IMR-90 (cell line): ENCODE measurements at regions of chr1 and their contacts with region 1.

Region 1: DNA sequence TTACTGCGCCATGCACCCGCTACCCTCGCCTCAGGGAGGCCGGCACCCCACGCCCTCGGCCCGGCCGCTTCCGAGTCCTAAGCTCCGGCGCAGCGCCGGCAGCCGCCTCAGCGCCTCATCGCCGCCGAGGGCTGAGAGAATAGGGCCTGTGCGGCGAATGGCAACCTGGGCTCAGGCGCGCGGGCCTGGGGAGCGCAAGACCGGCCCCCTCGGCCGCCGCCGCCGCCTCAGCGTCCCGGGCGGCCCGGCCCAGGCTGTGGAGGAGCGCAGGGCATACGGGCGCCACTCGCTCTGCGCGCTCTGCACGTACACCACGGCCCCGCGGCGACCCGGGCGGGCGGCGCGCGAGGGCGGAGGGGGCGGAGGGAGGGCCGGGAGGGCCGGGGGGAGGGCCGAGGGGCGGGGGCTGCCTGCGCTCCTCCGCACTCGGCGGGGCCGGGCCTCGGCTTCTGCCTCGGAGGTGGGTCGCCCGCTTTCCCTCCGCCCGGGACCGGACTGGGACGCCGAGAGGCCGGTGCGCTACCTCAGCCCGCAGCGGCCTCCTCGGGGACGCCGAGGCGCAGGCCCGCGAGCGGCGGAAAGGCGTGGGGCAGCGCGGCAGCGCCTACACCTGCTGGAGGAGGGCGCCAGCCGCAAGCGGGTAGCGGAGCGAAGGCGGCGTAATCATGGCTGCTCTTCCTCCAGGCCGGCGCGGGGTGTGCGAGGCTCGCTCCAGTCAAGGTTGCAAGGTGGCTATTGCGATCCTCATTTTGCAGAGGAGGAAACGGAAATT is at the start of gene EGLN1:
- DNase-seq: peak; percentile 88
- ATAC-seq: peak; percentile 85
- H3K4me3 ChIP-seq: peak within 1 kb of the TSS; percentile 78
- H3K27ac ChIP-seq: peak within 1 kb of the TSS; percentile 98
- H3K4me1 ChIP-seq: peaks cover 7% of the 10 kb centered on the region
- H3K27me3 ChIP-seq: no peaks in the 10 kb centered on the region
- CTCF ChIP-seq: peak; percentile 38
- POLR2A ChIP-seq: peak; percentile 81
- RAD21 ChIP-seq: peak; percentile 51
- total RNA-seq, gene EGLN1: 26.9 and 66.4 TPM in 2 replicates

Region 2: GRCh38 chr1:231357831-231358354 is 64.3 kb before region 1 on chr1:
- CTCF ChIA-PET with region 1: no interaction called
- POLR2A ChIA-PET with region 1: no interaction called
- dilution Hi-C with region 1: no loop called
- in situ Hi-C with region 1: loop called (anchors 5 kb)
- intact Hi-C with region 1: loop called (anchors 1 kb)
- DNase-seq: peak; percentile 79
- ATAC-seq: peak; percentile 75
- H3K4me3 ChIP-seq: no peak overlapping the region
- H3K27ac ChIP-seq: no peak overlapping the region
- H3K4me1 ChIP-seq: peaks cover 5% of the 10 kb centered on the region
- H3K27me3 ChIP-seq: no peaks in the 10 kb centered on the region
- CTCF ChIP-seq: peak; percentile 87
- POLR2A ChIP-seq: peak; percentile 37; the same call in 1 of the 2 replicates
- RAD21 ChIP-seq: peak; percentile 92

Region 3: GRCh38 chr1:231369282-231369681 is 52.9 kb before region 1 on chr1:
- CTCF ChIA-PET with region 1: no interaction called
- POLR2A ChIA-PET with region 1: no interaction called
- dilution Hi-C with region 1: no loop called
- in situ Hi-C with region 1: loop called (anchors 5 kb)
- intact Hi-C with region 1: loop called (anchors 2 kb)
- DNase-seq: no peak
- ATAC-seq: no peak
- H3K4me3 ChIP-seq: no peak overlapping the region
- H3K27ac ChIP-seq: no peak overlapping the region
- H3K4me1 ChIP-seq: no peaks in the 10 kb centered on the region; the same call in 1 of the 2 replicates
- H3K27me3 ChIP-seq: no peaks in the 10 kb centered on the region
- CTCF ChIP-seq: no peak
- POLR2A ChIP-seq: no peak
- RAD21 ChIP-seq: no peak

Region 4: GRCh38 chr1:231517064-231517463 is 94.9 kb after region 1 on chr1:
- CTCF ChIA-PET with region 1: no interaction called
- POLR2A ChIA-PET with region 1: no interaction called
- dilution Hi-C with region 1: no loop called
- in situ Hi-C with region 1: no loop called
- intact Hi-C with region 1: no loop called
- DNase-seq: no peak
- ATAC-seq: no peak
- H3K4me3 ChIP-seq: no peak overlapping the region
- H3K27ac ChIP-seq: no peak overlapping the region
- H3K4me1 ChIP-seq: no peaks in the 10 kb centered on the region
- H3K27me3 ChIP-seq: no peaks in the 10 kb centered on the region
- CTCF ChIP-seq: no peak
- POLR2A ChIP-seq: no peak
- RAD21 ChIP-seq: no peak

Region 5: DNA sequence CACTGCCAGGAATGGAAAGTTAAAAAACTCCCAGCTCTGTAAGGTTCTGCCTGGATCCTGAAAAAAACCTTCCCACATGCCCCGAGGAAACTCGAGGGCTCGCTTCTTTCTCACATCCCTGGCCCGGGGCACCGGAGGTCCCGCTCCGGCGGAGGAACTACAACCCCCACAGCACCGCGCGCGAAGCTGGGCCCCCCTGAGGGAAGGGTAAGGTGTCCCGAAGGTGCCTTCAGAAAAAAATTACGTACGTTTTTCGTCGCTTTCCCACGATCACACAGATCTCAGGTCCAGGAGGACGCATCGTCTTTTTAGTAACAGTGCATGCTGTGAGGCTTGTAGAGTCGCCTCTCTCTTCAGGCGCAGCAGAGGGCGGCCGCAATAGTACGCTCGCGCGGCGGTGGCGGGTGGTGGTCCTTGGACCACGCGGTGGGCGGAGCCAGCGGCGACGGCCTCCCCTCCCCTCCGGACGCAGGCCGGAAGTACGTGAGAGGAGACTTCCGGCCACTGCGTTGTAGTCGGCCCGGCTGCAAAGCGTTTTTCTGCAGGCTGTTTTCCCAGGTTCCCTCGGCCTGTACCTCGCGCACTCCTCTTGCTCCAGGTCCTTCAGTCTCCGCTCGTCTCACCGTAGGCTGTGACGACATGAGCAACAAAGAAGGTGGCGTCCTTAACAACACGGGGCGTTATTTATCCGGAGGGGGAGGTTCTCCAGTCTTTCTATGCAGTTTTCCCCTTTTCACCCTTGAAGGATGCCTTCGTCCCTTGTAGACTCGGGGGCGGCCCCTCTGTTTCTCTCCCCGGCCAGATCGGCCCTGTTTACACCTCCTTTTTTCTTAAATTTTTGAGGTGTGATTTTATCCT is 106.2 kb after region 1 on chr1 and contains the start of gene TSNAX:
- CTCF ChIA-PET with region 1: no interaction called
- POLR2A ChIA-PET with region 1: no interaction called
- dilution Hi-C with region 1: no loop called
- in situ Hi-C with region 1: no loop called
- intact Hi-C with region 1: loop called (anchors 1 kb)
- DNase-seq: peak; percentile 92
- ATAC-seq: peak; percentile 99
- H3K4me3 ChIP-seq: peak within 1 kb of the TSS; percentile 75
- H3K27ac ChIP-seq: peak within 1 kb of the TSS; percentile 89
- H3K4me1 ChIP-seq: peaks cover 5% of the 10 kb centered on the region
- H3K27me3 ChIP-seq: no peaks in the 10 kb centered on the region
- CTCF ChIP-seq: no peak
- POLR2A ChIP-seq: peak; percentile 81
- RAD21 ChIP-seq: no peak; the same call in 1 of the 2 replicates
- total RNA-seq, gene TSNAX: 60.6 and 61.4 TPM in 2 replicates

Region 6: GRCh38 chr1:231584124-231584523 is 161.9 kb after region 1 on chr1:
- CTCF ChIA-PET with region 1: no interaction called
- POLR2A ChIA-PET with region 1: no interaction called
- dilution Hi-C with region 1: no loop called
- in situ Hi-C with region 1: no loop called
- intact Hi-C with region 1: loop called (anchors 2 kb)
- DNase-seq: peak; percentile 82
- ATAC-seq: peak; percentile 88
- H3K4me3 ChIP-seq: no peak overlapping the region
- H3K27ac ChIP-seq: no peak overlapping the region
- H3K4me1 ChIP-seq: no peaks in the 10 kb centered on the region
- H3K27me3 ChIP-seq: no peaks in the 10 kb centered on the region
- CTCF ChIP-seq: peak; percentile 42
- POLR2A ChIP-seq: no peak
- RAD21 ChIP-seq: peak; percentile 55